ENCODE measurements at regions of chr1 and their contacts with region 1.

Region 1: DNA sequence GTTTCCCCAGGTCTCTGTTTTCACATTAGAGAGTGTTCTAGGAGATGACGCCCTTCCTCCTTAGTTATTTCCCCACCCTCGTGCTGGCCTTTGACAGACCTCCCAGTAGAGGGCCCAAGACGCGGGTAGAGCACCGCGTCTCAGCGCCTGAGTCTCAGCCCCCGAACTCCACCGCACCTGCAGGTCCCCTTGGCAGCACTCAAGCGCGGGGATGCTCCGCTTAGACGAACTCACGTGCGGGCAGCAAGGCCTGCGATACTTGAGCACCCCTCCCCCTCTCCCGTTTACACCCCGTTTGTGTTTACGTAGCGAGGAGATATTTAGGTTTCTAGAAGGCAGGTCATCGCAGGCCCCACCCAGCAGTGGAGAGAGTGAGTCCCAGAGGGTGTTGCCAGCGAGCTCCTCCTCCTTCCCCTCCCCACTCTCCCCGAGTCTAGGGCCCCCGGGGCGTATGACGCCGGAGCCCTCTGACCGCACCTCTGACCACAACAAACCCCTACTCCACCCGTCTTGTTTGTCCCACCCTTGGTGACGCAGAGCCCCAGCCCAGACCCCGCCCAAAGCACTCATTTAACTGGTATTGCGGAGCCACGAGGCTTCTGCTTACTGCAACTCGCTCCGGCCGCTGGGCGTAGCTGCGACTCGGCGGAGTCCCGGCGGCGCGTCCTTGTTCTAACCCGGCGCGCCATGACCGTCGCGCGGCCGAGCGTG is at the start of gene CD55:
- DNase-seq: peak; percentile 93
- ATAC-seq: peak; percentile 87
- H3K4me3 Mint-ChIP-seq: peak within 1 kb of the TSS; percentile 89
- H3K27ac Mint-ChIP-seq: peak within 1 kb of the TSS; percentile 97
- H3K4me1 Mint-ChIP-seq: peaks cover 23% of the 10 kb centered on the region
- H3K27me3 Mint-ChIP-seq: no peaks in the 10 kb centered on the region
- CTCF ChIP-seq: no peak
- total RNA-seq, gene CD55: 17.2 to 18.8 TPM (median 18.1 TPM) in 3 replicates

Region 2: DNA sequence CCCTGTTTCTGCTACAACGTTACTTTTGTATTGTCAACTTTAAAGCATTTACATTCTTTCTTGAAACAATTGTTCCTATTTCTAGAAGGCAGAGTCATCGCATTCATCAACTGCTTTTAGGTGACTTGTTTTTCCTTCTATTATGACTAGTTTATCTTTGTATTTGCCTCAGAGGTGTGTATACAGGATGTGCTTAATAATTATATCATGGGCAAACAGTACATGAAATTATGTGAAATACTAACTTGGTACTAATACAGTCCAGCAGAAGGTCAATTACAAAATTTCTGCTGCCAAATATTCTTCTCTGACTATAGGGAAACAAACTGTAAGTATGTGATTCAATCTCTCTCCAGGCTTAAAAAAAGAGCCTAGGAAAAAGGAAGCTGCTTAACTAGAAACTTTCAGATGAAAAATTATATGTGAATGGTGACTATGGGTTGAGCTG is 115.6 kb before region 1 on chr1:
- CTCF ChIA-PET with region 1: no interaction called
- POLR2A ChIA-PET with region 1: no interaction called
- DNase-seq: no peak
- ATAC-seq: no peak
- H3K4me3 Mint-ChIP-seq: no peak overlapping the region
- H3K27ac Mint-ChIP-seq: no peak overlapping the region
- H3K4me1 Mint-ChIP-seq: no peaks in the 10 kb centered on the region
- H3K27me3 Mint-ChIP-seq: peaks cover 8% of the 10 kb centered on the region
- CTCF ChIP-seq: no peak

Region 3: GRCh38 chr1:207227131-207227630 is 94.1 kb before region 1 on chr1:
- CTCF ChIA-PET with region 1: no interaction called
- POLR2A ChIA-PET with region 1: no interaction called
- DNase-seq: no peak
- ATAC-seq: no peak
- H3K4me3 Mint-ChIP-seq: no peak overlapping the region
- H3K27ac Mint-ChIP-seq: no peak overlapping the region
- H3K4me1 Mint-ChIP-seq: peaks cover 2% of the 10 kb centered on the region
- H3K27me3 Mint-ChIP-seq: no peaks in the 10 kb centered on the region
- CTCF ChIP-seq: no peak

Region 4: DNA sequence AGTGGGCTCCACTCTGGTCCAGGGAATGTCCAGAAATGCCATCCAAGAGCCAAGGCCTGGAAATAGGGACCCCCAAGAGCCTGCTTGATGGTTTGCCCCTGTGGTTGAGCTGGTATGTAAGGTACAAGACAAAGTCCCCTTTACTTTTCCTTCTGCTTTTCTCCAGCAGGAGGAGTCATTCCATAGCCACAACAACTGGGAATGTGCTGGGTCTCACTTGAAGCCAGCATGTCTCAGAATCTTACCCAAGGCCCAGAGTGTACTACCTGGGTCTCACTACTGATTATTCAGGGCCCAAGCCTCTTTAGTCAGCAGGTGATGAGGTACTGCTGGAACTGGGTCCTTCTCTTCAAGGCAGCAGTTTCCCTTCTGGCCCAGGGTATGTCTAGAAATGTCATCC is 61.8 kb before region 1 on chr1:
- CTCF ChIA-PET with region 1: interaction called, 11 read pairs
- POLR2A ChIA-PET with region 1: interaction called, 8 read pairs
- DNase-seq: no peak
- ATAC-seq: peak; percentile 92
- H3K4me3 Mint-ChIP-seq: no peak overlapping the region
- H3K27ac Mint-ChIP-seq: no peak overlapping the region
- H3K4me1 Mint-ChIP-seq: peaks cover 5% of the 10 kb centered on the region
- H3K27me3 Mint-ChIP-seq: no peaks in the 10 kb centered on the region
- CTCF ChIP-seq: no peak; the same call in 1 of the 2 replicates

Region 5: DNA sequence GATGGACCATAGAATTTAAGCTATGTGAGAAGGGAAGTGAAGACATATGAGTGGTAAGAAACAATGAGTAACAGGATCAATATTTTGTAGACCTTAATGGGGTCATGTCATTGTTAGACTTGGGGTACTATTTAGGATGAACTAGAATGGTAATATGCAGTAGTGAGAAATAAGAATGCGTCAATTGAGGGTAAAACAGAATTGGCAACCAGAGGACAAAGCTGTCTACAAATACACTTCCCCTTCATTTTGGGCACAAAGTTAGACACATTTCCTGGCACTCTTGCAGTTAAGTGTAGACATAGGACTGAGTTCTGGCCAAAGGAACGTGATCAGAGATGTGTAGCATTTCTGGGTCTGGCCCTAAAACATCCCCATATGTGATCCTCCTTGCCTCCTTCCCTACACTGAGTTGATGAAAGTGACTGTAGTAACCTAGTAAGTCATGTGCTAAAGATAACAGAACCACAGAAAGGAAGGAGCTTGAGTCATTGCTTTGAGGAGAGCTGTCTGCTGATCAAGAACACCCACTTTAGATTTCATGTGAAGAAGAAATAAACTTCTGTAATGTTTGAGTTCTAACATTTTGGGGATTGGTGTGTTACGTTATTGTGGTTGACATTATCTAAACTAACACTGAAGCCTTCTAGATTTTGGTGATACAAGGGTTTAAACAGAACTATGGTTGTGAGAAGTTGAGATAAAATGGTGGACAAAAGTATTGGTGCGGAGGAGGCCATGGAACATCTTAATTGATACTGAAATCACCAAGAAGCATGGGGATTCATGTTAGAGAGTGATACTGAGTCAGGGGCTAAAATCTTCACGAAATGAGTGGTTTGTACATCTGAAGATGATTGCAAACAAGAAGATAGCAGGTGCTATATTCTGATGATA is 42.0 kb after region 1 on chr1:
- CTCF ChIA-PET with region 1: no interaction called
- POLR2A ChIA-PET with region 1: no interaction called
- DNase-seq: no peak
- ATAC-seq: no peak
- H3K4me3 Mint-ChIP-seq: no peak overlapping the region
- H3K27ac Mint-ChIP-seq: no peak overlapping the region
- H3K4me1 Mint-ChIP-seq: no peaks in the 10 kb centered on the region
- H3K27me3 Mint-ChIP-seq: no peaks in the 10 kb centered on the region
- CTCF ChIP-seq: no peak

Region 6: GRCh38 chr1:207414606-207415108 is 93.4 kb after region 1 on chr1:
- CTCF ChIA-PET with region 1: no interaction called
- POLR2A ChIA-PET with region 1: no interaction called
- DNase-seq: no peak
- ATAC-seq: no peak
- H3K4me3 Mint-ChIP-seq: no peak overlapping the region
- H3K27ac Mint-ChIP-seq: no peak overlapping the region
- H3K4me1 Mint-ChIP-seq: peaks cover 3% of the 10 kb centered on the region
- H3K27me3 Mint-ChIP-seq: no peaks in the 10 kb centered on the region; the same call in 1 of the 2 replicates
- CTCF ChIP-seq: no peak